MCF 10A (cell line): ENCODE measurements at regions of chr20 and their contacts with region 1.

Region 1: DNA sequence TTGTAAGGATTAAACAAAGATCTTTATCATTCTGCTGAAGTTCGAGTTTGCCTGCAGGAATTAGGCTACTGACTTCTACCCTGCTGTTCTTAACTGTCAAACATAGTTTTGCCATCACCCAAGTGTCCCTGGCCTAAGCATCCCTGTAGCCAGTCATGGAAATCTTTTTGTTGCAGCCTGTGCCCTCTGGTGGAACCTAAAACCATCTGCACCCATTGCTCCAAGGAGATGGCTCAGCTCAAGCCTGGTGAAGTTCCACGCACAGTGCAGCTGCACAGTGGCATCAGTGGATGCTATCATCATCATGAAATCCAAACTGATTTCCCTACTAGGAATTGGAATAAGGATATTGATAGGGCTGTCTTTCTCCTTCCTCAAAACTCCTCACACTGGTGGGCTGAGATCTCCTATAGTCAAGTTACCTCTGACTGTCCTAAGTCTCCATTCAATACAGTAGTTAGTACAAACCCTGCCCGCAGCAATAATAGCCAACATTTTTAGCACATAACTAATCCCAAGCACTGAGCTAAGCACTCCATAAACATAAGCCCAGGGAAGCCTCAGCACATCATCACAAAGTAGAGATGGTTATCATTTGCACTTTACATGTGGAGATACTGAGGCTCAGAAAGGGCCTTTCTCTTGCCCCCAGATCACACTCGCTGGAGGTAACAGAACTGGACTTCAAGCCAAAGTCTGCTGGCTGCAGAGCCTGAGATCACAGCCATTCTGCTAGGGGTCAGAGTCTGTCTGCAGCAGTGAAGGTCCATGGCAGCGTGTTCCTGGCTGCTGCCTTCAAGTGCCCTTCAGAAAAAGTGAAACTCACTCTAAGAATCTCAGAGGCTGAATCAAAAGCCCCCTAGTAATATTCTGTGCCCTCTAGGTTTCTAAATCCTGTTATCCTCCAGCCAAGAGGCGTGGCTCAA is 77.2 kb upstream of the MC3R start:
- DNase-seq: peak; percentile 32
- H3K4me3 Mint-ChIP-seq: no peak overlapping the region
- H3K27ac Mint-ChIP-seq: no peak overlapping the region
- H3K4me1 Mint-ChIP-seq: no peaks in the 10 kb centered on the region
- H3K27me3 Mint-ChIP-seq: peaks cover 27% of the 10 kb centered on the region
- CTCF ChIP-seq: peak; percentile 42

Region 2: DNA sequence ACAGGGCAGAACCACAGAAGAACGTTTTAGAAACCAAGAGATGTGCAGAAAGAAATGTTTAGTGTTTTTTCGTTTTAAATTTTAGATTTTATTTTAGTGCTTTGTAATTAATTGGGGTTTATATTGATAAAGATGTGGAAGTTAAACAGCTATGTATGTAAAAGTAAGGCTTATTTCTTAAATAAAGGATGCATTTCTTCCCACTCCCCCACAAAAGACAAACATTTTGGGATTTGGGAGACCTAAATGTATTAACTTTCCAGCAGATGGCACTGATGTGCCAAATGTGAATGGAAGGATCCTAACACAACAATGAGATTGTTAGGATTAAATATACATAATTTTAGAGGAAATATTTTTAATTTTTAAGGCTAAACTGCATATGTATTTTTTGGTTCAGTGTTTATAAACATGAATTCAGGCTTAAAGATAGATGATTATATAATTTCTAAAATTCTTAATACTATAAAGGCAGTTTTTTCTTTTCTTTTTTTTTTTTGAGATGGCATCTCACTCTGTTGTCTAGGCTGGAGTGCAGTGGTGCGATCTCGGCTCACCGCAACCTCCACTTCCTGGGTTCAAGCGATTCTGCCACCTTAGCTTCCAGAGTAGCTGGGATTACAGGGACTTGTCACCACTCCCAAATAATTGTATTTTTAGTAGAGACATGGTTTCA is 1951.5 kb before region 1 on chr20:
- CTCF ChIA-PET with region 1: no interaction called
- POLR2A ChIA-PET with region 1: no interaction called
- intact Hi-C with region 1: loop called (anchors 10 kb)
- DNase-seq: peak; percentile 65
- H3K4me3 Mint-ChIP-seq: no peak overlapping the region
- H3K27ac Mint-ChIP-seq: no peak overlapping the region
- H3K4me1 Mint-ChIP-seq: peaks cover 10% of the 10 kb centered on the region
- H3K27me3 Mint-ChIP-seq: no peaks in the 10 kb centered on the region
- CTCF ChIP-seq: peak; percentile 57

Region 3: GRCh38 chr20:54980103-54980960 is 1191.0 kb before region 1 on chr20:
- CTCF ChIA-PET with region 1: interaction called, 3 read pairs
- POLR2A ChIA-PET with region 1: no interaction called
- intact Hi-C with region 1: loop called (anchors 2 kb)
- DNase-seq: no peak
- H3K4me3 Mint-ChIP-seq: no peak overlapping the region
- H3K27ac Mint-ChIP-seq: no peak overlapping the region
- H3K4me1 Mint-ChIP-seq: no peaks in the 10 kb centered on the region
- H3K27me3 Mint-ChIP-seq: no peaks in the 10 kb centered on the region
- CTCF ChIP-seq: peak; percentile 35

Region 4: DNA sequence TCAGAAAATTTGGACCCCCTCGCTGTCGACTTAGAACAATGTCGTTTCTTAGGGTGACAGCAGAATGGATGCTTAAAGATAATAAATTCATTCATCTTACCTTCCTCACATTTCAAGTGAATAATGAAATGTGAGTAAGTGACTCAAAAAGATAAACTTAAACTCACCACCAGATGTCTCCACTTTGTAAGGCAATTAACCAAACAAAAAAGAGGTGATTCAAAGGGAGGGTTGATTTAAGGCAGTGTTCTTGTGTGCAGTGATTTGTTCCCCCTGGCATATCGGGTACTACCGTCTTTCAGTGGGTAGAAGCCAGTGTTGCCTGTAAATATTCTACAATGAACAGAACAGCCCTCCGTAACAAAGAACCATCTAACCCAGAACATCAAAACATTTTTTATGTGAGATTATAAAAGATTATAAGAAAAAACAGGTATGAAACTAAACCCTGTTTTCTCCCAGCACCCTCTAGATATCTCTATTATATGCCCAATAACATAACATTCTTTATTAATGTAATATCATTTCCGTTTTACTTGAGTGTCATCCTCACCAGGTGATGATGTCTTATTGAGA is 755.7 kb before region 1 on chr20:
- CTCF ChIA-PET with region 1: interaction called, 6 read pairs
- POLR2A ChIA-PET with region 1: interaction called, 3 read pairs
- intact Hi-C with region 1: loop called (anchors 1 kb)
- DNase-seq: peak; percentile 23
- H3K4me3 Mint-ChIP-seq: no peak overlapping the region
- H3K27ac Mint-ChIP-seq: no peak overlapping the region
- H3K4me1 Mint-ChIP-seq: no peaks in the 10 kb centered on the region
- H3K27me3 Mint-ChIP-seq: no peaks in the 10 kb centered on the region
- CTCF ChIP-seq: peak; percentile 20

Region 5: DNA sequence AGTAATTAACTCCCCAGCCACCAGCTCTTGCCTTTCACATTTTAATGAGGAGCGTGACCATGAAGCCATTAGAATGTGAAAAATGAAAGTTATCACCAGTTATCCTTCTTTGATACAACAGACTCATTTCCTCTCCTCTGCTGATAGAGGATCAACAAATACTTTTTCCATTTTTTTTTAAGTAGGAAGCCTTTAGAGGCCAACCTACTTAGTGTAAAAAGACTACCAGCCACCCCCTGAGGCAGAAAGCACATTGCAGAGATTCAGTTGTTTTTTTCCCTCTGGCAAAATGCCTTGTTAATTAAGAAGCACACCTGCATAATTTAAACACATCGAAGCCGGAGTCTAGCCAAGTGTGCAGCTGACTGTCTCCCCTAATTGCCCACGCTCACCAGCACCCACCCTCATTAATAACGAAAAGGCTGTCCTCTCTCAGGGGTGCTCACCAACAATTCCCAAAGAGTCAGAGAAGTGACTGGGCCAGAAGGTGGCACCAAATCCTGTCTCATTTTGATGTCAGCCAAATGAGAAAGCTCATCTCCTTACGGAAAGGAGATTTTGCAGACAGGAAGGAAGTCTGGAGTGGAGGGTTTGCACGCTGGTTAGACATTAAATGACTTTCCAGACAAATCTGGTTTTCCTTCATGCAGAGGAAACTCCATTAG is 16.3 kb after region 1 on chr20:
- CTCF ChIA-PET with region 1: interaction called, 28 read pairs
- POLR2A ChIA-PET with region 1: interaction called, 3 read pairs
- intact Hi-C with region 1: no loop called
- DNase-seq: peak; percentile 62
- H3K4me3 Mint-ChIP-seq: no peak overlapping the region
- H3K27ac Mint-ChIP-seq: no peak overlapping the region
- H3K4me1 Mint-ChIP-seq: peaks cover 6% of the 10 kb centered on the region
- H3K27me3 Mint-ChIP-seq: no peaks in the 10 kb centered on the region
- CTCF ChIP-seq: peak; percentile 48